ENCODE measurements at regions of chr1 and their contacts with region 1.

Region 1: DNA sequence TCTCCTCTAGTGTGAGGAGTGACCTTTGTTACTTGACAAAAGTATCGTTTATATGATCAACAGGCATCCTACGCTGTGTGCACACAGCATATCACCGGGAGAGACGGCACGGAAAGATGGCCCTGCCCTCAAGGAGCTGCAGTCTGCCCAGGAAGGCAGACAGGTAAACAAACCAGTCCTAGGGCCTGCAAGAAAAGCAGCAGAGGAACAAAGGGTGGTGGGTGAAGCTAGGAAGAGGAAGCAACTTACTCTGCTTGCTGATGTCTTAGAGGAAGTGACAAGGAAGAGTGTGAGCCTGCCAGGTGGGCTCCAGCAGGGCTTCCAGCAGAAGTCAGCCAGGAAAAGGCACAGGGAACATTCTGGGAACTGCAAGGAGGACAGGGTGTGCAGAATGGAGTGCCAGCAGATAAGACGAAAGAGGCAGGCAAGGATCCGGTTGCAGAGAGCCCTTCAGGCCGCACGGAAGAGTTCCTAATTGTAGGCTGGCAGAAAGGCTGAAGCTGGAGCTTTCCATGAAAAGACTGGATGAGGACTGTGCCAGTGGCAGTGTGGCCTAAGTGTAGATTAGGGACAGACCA is 106.7 kb downstream of the SLC45A1 start:
- DNase-seq: peak; percentile 65 to 86 (median 81)
- ATAC-seq: peak; percentile 54
- H3K4me3 ChIP-seq: no peak overlapping the region
- H3K27ac ChIP-seq: peak overlapping the region; percentile 93 to 98 (median 96)
- H3K4me1 ChIP-seq: peaks cover 48% of the 10 kb centered on the region
- H3K27me3 ChIP-seq: no peaks in the 10 kb centered on the region
- CTCF ChIP-seq: peak in 1 of 7 experiments; percentile 2
- POLR2A ChIP-seq: peak in 2 of 3 donors; percentile 45 to 58

Region 2: DNA sequence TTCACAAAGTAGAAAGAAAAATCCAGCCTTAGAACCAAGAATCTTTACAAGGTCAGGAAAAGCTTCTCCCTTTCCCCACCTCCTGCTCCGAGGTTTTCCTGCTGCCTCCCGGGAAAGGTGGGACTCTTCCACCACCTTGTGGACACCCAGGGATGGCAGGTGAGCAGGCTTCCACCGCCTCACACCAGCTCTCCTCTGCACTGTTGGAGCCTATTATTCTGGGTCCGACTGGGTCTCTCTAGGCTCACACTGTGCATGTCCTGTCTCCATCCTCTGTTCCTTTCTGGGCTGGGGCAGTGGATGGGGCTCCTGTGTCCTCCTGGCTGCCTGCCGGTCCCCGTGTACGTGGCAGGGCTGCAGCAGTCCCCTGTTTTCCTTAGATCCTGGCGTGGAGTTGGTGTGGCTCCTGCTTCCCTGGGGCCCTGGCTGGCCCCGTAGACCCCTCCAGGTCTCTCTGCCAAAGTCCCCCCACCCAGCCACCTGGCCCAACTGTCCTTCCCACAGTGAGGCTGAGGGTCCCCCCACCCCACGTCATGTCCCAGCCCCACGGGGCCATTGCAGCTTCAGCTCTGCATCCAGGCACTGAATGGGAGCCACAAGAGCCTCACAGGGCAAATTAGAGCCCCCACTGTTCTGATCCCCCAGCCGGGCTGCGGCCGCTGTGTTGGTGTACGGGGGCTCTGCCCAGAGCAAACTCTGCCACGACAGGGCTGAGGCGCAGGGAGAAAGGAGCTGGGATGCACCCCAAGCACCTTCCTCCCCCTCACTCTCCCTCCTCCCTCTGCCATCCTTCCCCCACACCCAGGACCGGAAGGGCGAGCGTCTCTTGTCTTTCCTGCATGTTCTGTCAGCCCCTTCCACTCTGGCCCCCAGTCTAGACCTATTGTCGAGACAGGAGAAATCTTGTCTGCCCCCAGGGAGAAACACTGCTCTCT is 110.0 kb before region 1 on chr1:
- intact Hi-C with region 1: no loop called
- DNase-seq: peak; percentile 87 to 90 (median 88)
- ATAC-seq: peak; percentile 75
- H3K4me3 ChIP-seq: no peak overlapping the region
- H3K27ac ChIP-seq: peak overlapping the region; percentile 21 to 94 (median 91)
- H3K4me1 ChIP-seq: peaks cover 49% of the 10 kb centered on the region
- H3K27me3 ChIP-seq: peaks cover 0 to 6% of the 10 kb centered on the region in 2 donors
- CTCF ChIP-seq: peak; percentile 72 to 99 (median 98)
- POLR2A ChIP-seq: no peak

Region 3: DNA sequence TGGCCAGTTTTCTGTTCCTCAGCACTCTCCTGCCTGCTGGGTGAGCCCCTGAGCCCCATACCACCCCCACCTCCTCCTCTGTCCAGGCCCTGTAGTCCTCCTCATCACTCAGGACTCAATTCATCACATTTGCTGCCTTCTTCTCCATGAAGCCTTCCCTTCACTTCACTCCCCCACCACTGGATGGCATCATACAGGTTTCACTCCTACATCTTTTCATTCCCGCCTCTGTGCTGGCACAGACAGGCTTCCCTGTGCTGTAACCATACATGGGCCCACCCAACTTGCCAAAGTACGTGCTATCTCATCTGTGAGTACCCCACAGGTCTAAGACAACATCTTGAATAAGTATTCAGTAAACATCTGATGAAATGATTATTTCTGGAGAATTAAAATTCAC is 49.8 kb before region 1 on chr1:
- intact Hi-C with region 1: loop called (anchors 5 kb)
- DNase-seq: peak in 3 of 4 donors; percentile 25 to 54 (median 48)
- ATAC-seq: no peak
- H3K4me3 ChIP-seq: no peak overlapping the region
- H3K27ac ChIP-seq: peak overlapping the region; percentile 9 to 86 (median 66)
- H3K4me1 ChIP-seq: peaks cover 70% of the 10 kb centered on the region
- H3K27me3 ChIP-seq: no peaks in the 10 kb centered on the region
- CTCF ChIP-seq: peak in 6 of 7 experiments; percentile 24 to 53 (median 38)
- POLR2A ChIP-seq: no peak